ENCODE measurements at regions of chr22 and their contacts with region 1.

Region 1: GRCh38 chr22:41946629-41947423 is at the start of gene CENPM:
- DNase-seq: peak; percentile 97
- H3K4me3 ChIP-seq: peak within 1 kb of the TSS; percentile 81
- H3K27ac ChIP-seq: 0 out of 2 replicates have a peak within 1 kb of the TSS, but pooled peaks have one; percentile 6
- H3K4me1 ChIP-seq: peaks cover 7% of the 10 kb centered on the region
- H3K27me3 ChIP-seq: no peaks in the 10 kb centered on the region
- total RNA-seq, gene CENPM: 5.7 and 15.0 TPM in 2 replicates

Region 2: GRCh38 chr22:41697126-41697775 is 249.6 kb before region 1 on chr22:
- in situ Hi-C with region 1: loop called (anchors 10 kb)
- DNase-seq: peak; percentile 87
- H3K4me3 ChIP-seq: peak overlapping the region; percentile 34
- H3K27ac ChIP-seq: no peak overlapping the region
- H3K4me1 ChIP-seq: peaks cover 13% of the 10 kb centered on the region; the same call in 1 of the 2 replicates
- H3K27me3 ChIP-seq: no peaks in the 10 kb centered on the region

Region 3: GRCh38 chr22:42134100-42135020 is 187.5 kb after region 1 on chr22:
- in situ Hi-C with region 1: no loop called
- DNase-seq: no peak
- H3K4me3 ChIP-seq: no peak overlapping the region
- H3K27ac ChIP-seq: no peak overlapping the region
- H3K4me1 ChIP-seq: no peaks in the 10 kb centered on the region
- H3K27me3 ChIP-seq: no peaks in the 10 kb centered on the region